ENCODE measurements at regions of chr17 and their contacts with region 1.

Region 1: DNA sequence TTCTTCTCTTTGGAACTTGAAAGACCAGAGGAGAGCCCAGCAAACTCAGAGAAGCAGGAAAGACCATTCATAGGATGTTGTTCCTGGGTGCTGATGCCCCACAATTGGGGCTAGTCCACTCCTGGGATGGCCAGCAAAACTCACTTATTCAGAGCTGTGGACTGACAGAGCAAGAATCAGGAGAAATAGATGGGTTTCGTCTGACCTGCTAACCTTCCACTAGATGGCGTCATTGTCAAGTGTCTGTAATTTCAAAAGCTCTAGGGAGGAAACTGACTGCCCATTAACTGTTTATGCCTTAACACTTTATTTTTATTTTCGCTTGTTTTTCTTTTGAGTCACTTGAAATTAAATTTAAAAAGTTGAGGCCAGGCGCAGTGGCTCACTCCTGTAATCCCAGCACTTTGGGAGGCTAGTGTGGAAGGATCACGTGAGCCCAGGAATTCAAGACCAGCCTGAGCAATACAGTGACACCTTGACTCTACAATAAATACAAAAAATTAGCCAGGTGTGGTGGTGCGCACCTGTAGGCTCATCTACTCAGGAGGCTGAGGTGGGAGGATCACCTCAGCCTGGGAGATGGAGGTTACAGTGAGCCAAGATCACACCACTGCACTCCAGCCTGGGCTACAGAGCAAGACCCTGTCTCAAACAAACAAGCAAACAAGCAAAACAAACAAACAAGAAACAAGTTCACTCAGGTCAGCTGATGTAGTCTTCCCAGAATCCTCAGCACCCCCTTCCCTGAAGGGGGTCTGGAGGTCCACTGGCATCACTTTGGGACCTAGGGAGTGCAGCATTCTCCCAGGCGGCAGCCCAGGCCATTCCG is 28.6 kb upstream of the MILR1 start:
- DNase-seq: no peak
- ATAC-seq: peak; percentile 79
- H3K4me3 Mint-ChIP-seq: no peak overlapping the region
- H3K27ac Mint-ChIP-seq: no peak overlapping the region
- H3K4me1 Mint-ChIP-seq: no peaks in the 10 kb centered on the region
- H3K27me3 Mint-ChIP-seq: no peaks in the 10 kb centered on the region
- CTCF ChIP-seq: peak; percentile 87

Region 2: DNA sequence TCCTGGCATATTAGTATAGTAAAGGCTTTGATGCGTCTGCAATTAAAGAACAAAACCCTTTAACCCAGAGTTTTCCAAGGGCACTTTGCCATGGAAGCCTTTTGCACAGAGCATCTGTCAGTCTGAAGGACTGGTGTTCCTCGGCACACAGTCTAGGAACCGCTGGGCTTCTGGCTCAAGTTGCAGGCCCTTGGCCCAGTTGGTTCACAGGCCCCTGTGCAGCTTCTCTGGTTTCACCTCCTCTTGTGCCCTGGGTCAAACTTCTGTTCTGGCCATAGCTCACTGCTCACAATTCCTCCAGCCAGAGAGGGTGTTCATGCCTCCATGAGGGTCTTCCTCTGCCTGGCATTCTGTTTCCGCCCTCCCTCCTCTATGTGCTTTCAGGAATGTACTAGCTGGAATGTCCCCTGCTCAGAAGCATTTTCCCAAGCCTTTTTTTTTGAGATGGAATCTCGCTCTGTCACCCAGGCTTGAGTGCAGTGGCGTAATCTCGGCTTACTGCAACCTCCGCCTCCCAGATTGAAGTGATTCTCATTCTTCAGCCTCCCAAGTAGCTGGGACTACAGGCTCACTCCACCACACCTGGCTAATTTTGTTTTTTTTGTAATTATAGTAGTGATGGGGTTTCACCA is 122.8 kb before region 1 on chr17:
- CTCF ChIA-PET with region 1: interaction called, 159 read pairs
- POLR2A ChIA-PET with region 1: no interaction called
- intact Hi-C with region 1: no loop called
- DNase-seq: no peak
- ATAC-seq: no peak
- H3K4me3 Mint-ChIP-seq: no peak overlapping the region
- H3K27ac Mint-ChIP-seq: no peak overlapping the region
- H3K4me1 Mint-ChIP-seq: no peaks in the 10 kb centered on the region
- H3K27me3 Mint-ChIP-seq: no peaks in the 10 kb centered on the region
- CTCF ChIP-seq: no peak

Region 3: DNA sequence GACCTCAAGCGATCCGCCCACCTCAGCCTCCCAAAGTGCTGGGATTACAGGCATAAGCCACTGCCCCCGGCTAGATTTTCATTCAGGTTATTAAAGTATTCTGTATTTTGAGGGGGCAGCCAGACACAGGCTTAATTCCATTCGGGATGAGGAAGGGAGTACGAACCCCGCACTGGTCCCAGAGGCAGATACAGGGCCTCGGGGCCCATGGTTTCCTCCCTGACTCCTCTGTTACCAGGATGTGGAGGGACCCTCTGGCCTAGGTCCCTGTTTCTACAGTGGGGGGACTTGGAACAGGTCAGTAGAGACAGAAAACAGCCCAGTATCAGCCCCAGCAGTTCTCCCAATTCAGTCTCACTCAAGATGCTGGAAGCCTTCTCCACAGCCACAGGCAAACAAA is 71.7 kb before region 1 on chr17:
- CTCF ChIA-PET with region 1: interaction called, 31 read pairs
- POLR2A ChIA-PET with region 1: interaction called, 4 read pairs
- intact Hi-C with region 1: no loop called
- DNase-seq: no peak
- ATAC-seq: no peak
- H3K4me3 Mint-ChIP-seq: no peak overlapping the region
- H3K27ac Mint-ChIP-seq: peak overlapping the region; percentile 88
- H3K4me1 Mint-ChIP-seq: peaks cover 28% of the 10 kb centered on the region
- H3K27me3 Mint-ChIP-seq: no peaks in the 10 kb centered on the region
- CTCF ChIP-seq: no peak

Region 4: DNA sequence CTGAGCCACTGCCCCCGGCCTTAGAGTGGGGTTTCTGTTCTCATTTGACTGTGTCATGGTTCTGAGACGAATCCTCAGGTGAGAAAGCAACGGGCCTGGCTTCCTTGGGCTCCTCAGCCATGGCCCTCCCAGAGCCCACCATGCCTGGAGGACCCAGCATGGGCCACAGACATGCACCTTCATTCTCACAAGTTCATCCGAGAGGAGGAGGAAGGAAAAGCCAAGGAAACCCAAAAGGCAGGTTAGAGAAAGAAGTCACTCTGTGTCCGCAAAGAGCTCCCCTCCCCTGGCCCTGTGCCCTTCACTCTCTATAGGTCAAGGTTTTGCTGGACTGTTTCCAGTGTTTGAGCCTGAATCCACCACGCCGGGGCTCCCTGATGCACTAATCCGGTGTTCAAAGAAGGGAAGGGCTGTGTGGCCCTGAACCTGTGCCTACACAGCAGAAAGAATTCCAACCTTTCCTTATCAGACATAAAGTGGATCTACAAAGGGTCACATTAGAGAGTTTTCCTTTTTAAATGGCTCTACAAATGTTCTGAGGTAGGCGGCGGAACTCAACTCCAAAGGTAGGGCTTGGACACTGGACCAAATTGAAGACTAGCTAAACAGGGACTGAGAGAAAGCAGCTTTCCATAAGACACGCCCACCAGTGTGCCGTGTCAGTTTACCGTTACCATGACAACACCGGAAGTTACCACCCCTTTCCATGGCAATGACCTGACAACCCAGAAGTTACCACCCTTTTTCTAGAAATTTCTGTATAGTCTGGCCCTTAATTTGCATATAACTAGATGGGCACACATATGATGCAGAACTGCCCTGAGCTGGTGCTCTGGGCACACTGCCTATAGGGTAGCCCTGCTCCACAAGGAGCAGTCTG is 13.8 kb before region 1 on chr17:
- CTCF ChIA-PET with region 1: interaction called, 73 read pairs
- POLR2A ChIA-PET with region 1: no interaction called
- intact Hi-C with region 1: no loop called
- DNase-seq: no peak
- ATAC-seq: no peak
- H3K4me3 Mint-ChIP-seq: no peak overlapping the region
- H3K27ac Mint-ChIP-seq: no peak overlapping the region
- H3K4me1 Mint-ChIP-seq: peaks cover 17% of the 10 kb centered on the region
- H3K27me3 Mint-ChIP-seq: no peaks in the 10 kb centered on the region
- CTCF ChIP-seq: no peak

Region 5: DNA sequence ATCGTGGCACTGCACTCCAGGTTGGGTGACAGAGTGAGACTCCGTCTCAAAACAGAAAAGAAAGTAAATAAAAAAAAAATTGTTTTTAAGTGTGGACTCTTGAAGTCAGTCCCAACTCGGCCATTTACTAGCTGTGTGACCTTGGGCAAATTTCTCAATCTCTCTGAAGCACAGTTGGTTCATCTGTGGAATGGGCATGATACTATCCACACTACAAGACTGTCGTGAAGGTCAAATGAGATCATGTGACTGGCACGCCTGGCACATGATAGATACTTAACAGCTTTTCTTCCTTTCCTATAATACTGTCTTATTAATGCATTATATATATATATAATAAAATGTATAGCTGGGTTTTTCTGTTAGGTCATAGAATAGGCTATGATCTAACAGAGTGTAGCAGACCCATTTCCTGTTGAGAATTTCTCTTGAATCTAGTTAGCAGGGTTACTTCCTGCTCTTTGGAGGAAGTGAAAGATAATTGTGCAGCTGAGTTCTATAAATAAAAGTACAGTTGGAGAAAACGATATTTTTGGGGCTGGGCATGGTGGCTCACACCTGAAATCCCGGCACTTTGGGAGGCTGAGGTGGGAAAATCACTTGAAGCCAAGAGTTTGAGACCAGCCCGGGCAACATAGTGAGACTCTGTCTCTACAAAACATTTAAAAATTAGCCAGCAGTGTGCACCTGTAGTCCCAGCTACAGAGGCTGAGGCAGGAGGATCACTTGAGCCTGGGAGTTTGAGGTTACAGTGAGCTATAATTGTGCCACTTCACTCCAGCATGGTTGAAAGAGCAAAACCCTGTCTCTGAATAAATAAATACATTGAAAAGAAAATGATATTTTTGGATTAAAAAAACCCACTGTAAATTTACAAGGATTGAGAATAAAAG is 35.9 kb after region 1 on chr17:
- CTCF ChIA-PET with region 1: interaction called, 22 read pairs
- POLR2A ChIA-PET with region 1: no interaction called
- intact Hi-C with region 1: no loop called
- DNase-seq: no peak
- ATAC-seq: peak; percentile 68
- H3K4me3 Mint-ChIP-seq: no peak overlapping the region
- H3K27ac Mint-ChIP-seq: peak overlapping the region; percentile 71
- H3K4me1 Mint-ChIP-seq: peaks cover 9% of the 10 kb centered on the region
- H3K27me3 Mint-ChIP-seq: no peaks in the 10 kb centered on the region
- CTCF ChIP-seq: no peak

Region 6: DNA sequence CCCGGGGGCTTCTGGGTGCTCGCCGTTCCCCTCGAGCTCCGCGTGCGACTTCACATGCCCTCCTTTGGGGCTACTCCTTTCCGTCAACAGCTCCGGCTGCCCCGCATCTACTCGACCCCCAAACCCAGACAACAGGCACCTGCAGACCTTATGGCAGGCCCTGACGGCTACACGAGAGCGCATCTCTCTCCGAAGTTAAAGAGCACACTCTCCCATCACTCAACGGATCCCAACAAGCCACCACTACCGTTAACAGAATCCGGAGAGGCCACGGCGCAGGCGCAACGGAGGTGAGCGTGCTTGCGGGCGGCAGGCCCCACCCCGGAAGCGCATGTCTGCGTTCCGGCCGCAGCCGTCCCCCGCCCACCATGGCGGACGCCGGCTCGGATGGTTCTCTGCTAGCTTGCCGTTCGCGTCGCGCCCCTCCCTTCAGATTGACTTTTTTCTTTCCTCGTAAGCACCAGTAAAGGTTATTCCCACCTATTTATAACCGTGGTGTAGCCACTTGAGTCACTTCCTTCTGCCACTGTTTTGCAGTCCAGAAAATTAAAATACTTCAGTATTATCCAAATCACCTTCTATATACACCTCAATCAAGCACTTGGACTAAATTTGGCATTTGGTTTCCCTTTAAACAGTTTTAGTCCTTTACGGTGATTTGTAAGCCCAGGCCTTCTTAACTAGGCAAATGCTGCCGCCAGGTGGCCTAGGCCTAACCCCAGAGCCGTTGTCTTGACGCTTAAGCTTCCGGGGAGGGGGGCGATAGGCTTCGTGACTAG is 76.6 kb after region 1 on chr17 and contains the start of gene POLG2:
- CTCF ChIA-PET with region 1: interaction called, 178 read pairs
- POLR2A ChIA-PET with region 1: interaction called, 11 read pairs
- intact Hi-C with region 1: loop called (anchors 5 kb)
- DNase-seq: peak; percentile 97
- ATAC-seq: peak; percentile 83
- H3K4me3 Mint-ChIP-seq: peak within 1 kb of the TSS; percentile 100
- H3K27ac Mint-ChIP-seq: peak within 1 kb of the TSS; percentile 97
- H3K4me1 Mint-ChIP-seq: peaks cover 61% of the 10 kb centered on the region
- H3K27me3 Mint-ChIP-seq: no peaks in the 10 kb centered on the region
- CTCF ChIP-seq: peak; percentile 69
- total RNA-seq, gene POLG2: 37.3 to 41.1 TPM

Region 7: GRCh38 chr17:64653325-64653984 is 233.1 kb after region 1 on chr17:
- CTCF ChIA-PET with region 1: interaction called, 30 read pairs
- POLR2A ChIA-PET with region 1: no interaction called
- intact Hi-C with region 1: loop called (anchors 5 kb)
- DNase-seq: no peak
- ATAC-seq: no peak
- H3K4me3 Mint-ChIP-seq: peak overlapping the region; percentile 45
- H3K27ac Mint-ChIP-seq: peak overlapping the region; percentile 77
- H3K4me1 Mint-ChIP-seq: peaks cover 48% of the 10 kb centered on the region
- H3K27me3 Mint-ChIP-seq: no peaks in the 10 kb centered on the region
- CTCF ChIP-seq: no peak